Body of pancreas (tissue), 4 donors: ENCODE measurements at regions of chr15 and their contacts with region 1.

Region 1: GRCh38 chr15:40274350-40275274 is 8.3 kb downstream of the ANKRD63 start:
- DNase-seq: peak; percentile 76 to 86 (median 82)
- ATAC-seq: peak; percentile 79
- H3K4me3 ChIP-seq: no peak overlapping the region
- H3K27ac ChIP-seq: no peak overlapping the region
- H3K4me1 ChIP-seq: peaks cover 4% of the 10 kb centered on the region
- H3K27me3 ChIP-seq: no peaks in the 10 kb centered on the region
- CTCF ChIP-seq: peak; percentile 97 to 100 (median 100)
- POLR2A ChIP-seq: no peak

Region 2: GRCh38 chr15:40044717-40045571 is 229.7 kb before region 1 on chr15:
- intact Hi-C with region 1: loop called (anchors 10 kb)
- DNase-seq: peak; percentile 86 to 91 (median 88)
- ATAC-seq: peak; percentile 92
- H3K4me3 ChIP-seq: no peak overlapping the region
- H3K27ac ChIP-seq: peak overlapping the region in 1 of 4 donors; percentile 7
- H3K4me1 ChIP-seq: peaks cover 45% of the 10 kb centered on the region
- H3K27me3 ChIP-seq: no peaks in the 10 kb centered on the region
- CTCF ChIP-seq: peak; percentile 85 to 98 (median 93)
- POLR2A ChIP-seq: no peak

Region 3: GRCh38 chr15:40217159-40217824 is 57.3 kb before region 1 on chr15:
- intact Hi-C with region 1: loop called (anchors 5 kb)
- DNase-seq: peak; percentile 60 to 86 (median 68)
- ATAC-seq: peak; percentile 97
- H3K4me3 ChIP-seq: no peak overlapping the region
- H3K27ac ChIP-seq: no peak overlapping the region
- H3K4me1 ChIP-seq: no peaks in the 10 kb centered on the region
- H3K27me3 ChIP-seq: no peaks in the 10 kb centered on the region
- CTCF ChIP-seq: peak; percentile 61 to 94 (median 89)
- POLR2A ChIP-seq: no peak

Region 4: GRCh38 chr15:40440743-40441564 is 166.3 kb after region 1 on chr15 and contains the start of gene BAHD1:
- intact Hi-C with region 1: no loop called
- DNase-seq: peak; percentile 96 to 97 (median 96)
- ATAC-seq: peak; percentile 88
- H3K4me3 ChIP-seq: peak within 1 kb of the TSS; percentile 80 to 93
- H3K27ac ChIP-seq: peak within 1 kb of the TSS; percentile 71 to 87 (median 84)
- H3K4me1 ChIP-seq: peaks cover 65% of the 10 kb centered on the region
- H3K27me3 ChIP-seq: no peaks in the 10 kb centered on the region
- CTCF ChIP-seq: no peak
- POLR2A ChIP-seq: peak; percentile 15 to 55 (median 39)
- total RNA-seq, gene BAHD1: 10.1 to 16.2 TPM

Region 5: GRCh38 chr15:40550341-40551037 is 275.9 kb after region 1 on chr15:
- intact Hi-C with region 1: no loop called
- DNase-seq: no peak
- ATAC-seq: no peak
- H3K4me3 ChIP-seq: no peak overlapping the region
- H3K27ac ChIP-seq: no peak overlapping the region
- H3K4me1 ChIP-seq: peaks cover 12% of the 10 kb centered on the region
- H3K27me3 ChIP-seq: no peaks in the 10 kb centered on the region
- CTCF ChIP-seq: no peak
- POLR2A ChIP-seq: no peak